MCF 10A (cell line): ENCODE measurements at regions of chr21 and their contacts with region 1.

Region 1: DNA sequence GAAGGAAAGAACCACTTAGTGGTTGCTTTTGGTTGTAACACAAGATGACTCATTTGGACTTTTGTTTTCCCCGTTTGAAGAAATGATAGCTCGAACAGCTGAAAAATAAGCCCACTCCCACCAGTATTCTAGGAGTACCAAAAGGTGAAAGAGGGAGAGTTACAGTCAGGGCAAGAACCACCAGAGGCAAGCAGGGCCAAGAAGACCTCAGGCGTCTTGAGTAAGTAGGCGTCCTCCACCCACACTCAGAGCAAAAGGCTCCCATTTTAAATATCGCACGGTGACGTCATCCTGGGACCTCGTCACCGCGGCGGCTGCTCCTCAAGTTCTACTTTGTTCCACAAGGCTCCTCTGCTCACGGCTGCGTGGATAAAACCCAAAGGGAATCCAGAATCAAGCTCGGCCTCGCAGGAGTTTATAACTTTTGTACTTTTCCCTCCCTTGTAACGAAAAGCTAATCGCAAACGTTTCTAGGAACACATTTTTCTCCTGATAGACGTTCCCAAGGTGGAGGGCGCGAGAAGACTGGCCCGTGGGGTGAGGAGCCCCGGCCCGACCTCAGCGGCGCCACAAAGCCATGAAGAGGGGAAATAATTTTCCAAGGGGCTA is 1.2 kb downstream of the BTG3 start:
- DNase-seq: peak; percentile 87
- H3K4me3 Mint-ChIP-seq: peak overlapping the region; percentile 89
- H3K27ac Mint-ChIP-seq: peak overlapping the region; percentile 93
- H3K4me1 Mint-ChIP-seq: peaks cover 10% of the 10 kb centered on the region
- H3K27me3 Mint-ChIP-seq: no peaks in the 10 kb centered on the region
- CTCF ChIP-seq: no peak

Region 2: DNA sequence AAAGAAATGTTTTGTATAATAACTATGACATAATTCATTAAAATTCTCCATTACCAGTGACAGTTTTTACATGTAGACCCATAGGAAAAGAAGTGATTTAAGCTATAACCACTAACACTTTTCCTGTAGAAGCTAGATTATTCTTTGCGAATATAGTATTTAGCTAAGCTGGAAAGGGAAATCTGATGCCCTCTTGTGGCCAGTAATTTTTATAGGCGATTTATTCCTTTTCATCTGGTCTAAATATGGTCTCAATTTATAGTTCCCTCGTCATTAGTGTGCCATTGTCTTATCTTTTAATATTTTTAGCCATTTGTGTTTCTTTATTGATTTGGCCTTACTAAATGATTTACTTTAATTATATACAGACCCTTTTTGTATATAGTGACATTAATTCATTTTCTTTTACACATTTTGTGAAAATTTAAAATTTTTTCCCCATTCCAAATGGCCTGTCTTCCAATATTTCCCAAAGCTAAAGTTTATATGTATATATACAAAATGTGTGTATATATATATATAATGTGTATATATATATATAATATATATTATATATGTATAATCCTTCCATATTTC is 25.6 kb before region 1 on chr21:
- CTCF ChIA-PET with region 1: interaction called, 4 read pairs
- POLR2A ChIA-PET with region 1: interaction called, 10 read pairs
- intact Hi-C with region 1: no loop called
- DNase-seq: peak; percentile 62
- H3K4me3 Mint-ChIP-seq: no peak overlapping the region
- H3K27ac Mint-ChIP-seq: no peak overlapping the region
- H3K4me1 Mint-ChIP-seq: no peaks in the 10 kb centered on the region
- H3K27me3 Mint-ChIP-seq: no peaks in the 10 kb centered on the region
- CTCF ChIP-seq: peak; percentile 45

Region 3: DNA sequence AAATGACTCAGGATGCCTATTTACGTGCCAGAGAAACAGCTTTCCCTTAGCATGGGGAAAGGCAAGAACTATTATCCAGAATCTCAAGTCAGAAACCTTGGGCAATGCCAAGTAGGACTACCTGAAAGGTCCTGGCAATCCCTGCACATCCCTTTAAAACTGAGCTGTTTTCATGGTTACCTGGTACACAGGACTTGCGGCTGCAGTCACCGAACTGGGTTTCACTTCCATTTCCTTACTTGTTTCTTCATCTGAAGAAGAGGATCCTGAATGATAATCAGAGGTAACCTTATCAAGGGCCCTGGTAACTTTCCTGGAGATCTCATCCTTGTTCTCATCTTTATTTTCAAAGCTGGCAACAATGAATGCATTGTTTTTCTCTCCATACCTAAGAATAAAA is 13.1 kb before region 1 on chr21:
- CTCF ChIA-PET with region 1: interaction called, 6 read pairs
- POLR2A ChIA-PET with region 1: interaction called, 16 read pairs
- intact Hi-C with region 1: no loop called
- DNase-seq: no peak
- H3K4me3 Mint-ChIP-seq: no peak overlapping the region
- H3K27ac Mint-ChIP-seq: no peak overlapping the region
- H3K4me1 Mint-ChIP-seq: peaks cover 9% of the 10 kb centered on the region
- H3K27me3 Mint-ChIP-seq: no peaks in the 10 kb centered on the region
- CTCF ChIP-seq: no peak

Region 4: DNA sequence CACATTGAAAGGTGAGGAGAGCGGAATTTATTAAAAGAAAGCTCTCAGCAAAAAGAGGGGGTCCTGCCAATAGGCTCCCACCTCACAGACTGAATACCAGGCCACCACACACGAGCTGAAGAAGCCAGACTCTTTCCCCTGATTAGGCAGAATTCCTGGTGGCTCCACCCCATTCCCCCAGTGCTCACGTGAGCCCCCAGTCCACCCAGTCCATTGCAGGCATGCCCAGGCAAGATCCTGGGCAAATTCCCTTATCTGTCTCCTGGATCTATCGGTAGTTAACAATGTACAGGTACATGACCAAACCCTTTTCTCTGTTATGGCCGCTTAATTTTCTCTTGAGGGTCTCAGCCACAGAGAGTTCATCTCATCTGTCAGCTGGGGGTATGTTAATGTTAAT is 55.7 kb after region 1 on chr21:
- CTCF ChIA-PET with region 1: interaction called, 3 read pairs
- POLR2A ChIA-PET with region 1: interaction called, 16 read pairs
- intact Hi-C with region 1: no loop called
- DNase-seq: peak; percentile 22
- H3K4me3 Mint-ChIP-seq: no peak overlapping the region
- H3K27ac Mint-ChIP-seq: peak overlapping the region; percentile 91
- H3K4me1 Mint-ChIP-seq: peaks cover 8% of the 10 kb centered on the region
- H3K27me3 Mint-ChIP-seq: no peaks in the 10 kb centered on the region
- CTCF ChIP-seq: no peak

Region 5: DNA sequence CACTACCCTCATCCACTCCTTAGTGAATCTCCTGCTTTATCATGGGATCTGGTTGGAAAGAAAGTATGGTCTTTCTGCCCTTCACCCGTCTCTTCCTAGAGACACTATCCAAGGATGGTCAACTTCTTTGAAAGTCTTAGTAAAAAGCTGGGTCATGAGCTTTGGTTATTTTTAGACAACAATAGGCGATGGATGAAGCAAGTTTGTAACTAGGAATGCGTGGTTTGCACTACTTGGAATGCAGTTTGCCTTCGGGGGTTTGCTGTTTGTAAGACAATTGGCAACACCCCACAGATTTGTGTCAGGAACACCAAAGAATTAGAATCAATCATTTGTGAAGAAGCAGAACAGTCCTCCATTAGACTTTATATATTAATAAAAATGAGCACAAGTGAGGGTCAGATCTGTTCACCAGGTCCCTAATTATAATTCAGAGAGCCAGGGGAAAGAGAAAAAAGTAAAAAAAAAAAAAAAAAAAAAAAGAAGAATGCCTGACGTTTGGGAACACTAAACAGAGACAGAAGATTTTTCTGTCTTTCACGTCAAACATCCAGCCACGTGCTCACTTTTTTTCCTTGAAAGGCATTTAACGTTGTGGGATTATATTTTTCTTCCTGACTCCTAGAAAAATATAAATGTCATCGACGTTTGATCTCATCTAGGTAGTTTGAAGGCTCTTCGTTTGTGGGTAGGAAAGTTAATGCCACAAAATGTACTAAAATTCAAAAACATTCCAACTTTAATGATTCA is 61.9 kb after region 1 on chr21:
- CTCF ChIA-PET with region 1: interaction called, 3 read pairs
- POLR2A ChIA-PET with region 1: interaction called, 19 read pairs
- intact Hi-C with region 1: no loop called
- DNase-seq: peak; percentile 76
- H3K4me3 Mint-ChIP-seq: no peak overlapping the region
- H3K27ac Mint-ChIP-seq: peak overlapping the region; percentile 68
- H3K4me1 Mint-ChIP-seq: peaks cover 13% of the 10 kb centered on the region
- H3K27me3 Mint-ChIP-seq: no peaks in the 10 kb centered on the region
- CTCF ChIP-seq: no peak